Mammary epithelial cell (primary cell): ENCODE measurements at regions of chr1 and their contacts with region 1.

Region 1: GRCh38 chr1:26279456-26280332 is at the start of gene SH3BGRL3:
- DNase-seq: peak; percentile 86
- H3K4me3 ChIP-seq: peak within 1 kb of the TSS; percentile 70 to 88 (median 73)
- H3K27ac ChIP-seq: peak within 1 kb of the TSS; percentile 86
- H3K4me1 ChIP-seq: peaks cover 90% of the 10 kb centered on the region
- H3K27me3 ChIP-seq: no peaks in the 10 kb centered on the region
- CTCF ChIP-seq: peak; percentile 40 to 69
- total RNA-seq, gene SH3BGRL3: 15.8 to 497 TPM

Region 2: DNA sequence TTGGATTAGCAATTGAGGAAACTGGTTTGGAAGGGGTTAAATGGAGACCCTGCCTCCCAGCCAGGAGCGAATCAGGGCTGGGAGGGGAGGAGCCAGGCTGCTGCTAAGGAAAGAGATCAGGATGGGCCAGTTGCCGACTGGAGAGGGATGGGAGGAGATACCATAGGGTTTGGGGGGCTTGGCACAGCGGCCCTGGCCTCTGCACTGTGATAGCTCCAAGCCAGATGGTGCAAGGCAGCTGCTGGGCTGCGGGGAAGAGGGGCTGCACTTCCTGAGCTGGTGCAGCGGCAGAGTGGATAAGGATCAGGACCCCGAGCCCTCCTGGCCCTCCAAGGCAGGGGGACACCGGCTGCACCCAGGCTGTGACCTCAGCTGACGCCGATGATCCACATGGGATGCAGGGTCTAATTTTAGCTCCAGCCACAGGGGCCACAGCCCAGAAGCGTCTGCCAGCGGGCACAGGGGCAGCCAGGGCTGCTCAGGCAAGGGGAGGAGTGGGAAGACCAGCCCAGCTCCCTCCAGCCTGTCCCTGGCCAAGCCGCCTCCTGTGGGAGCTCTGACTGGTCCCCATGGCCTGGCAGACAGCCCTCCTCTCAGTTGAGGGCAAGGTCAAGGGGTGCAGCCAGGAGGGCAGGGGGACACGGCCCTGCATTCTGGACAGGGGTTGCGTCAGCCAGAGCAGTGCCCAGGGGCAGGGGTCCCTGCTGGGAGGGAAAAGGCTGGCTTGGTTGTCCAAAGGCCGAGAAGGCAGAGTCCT is 257.9 kb before region 1 on chr1 and contains the start of gene EXTL1:
- CTCF ChIA-PET with region 1: no interaction called
- dilution Hi-C with region 1: no loop called
- in situ Hi-C with region 1: no loop called
- intact Hi-C with region 1: no loop called
- DNase-seq: no peak
- H3K4me3 ChIP-seq: no peak within 1 kb of the TSS
- H3K27ac ChIP-seq: no peak within 1 kb of the TSS
- H3K4me1 ChIP-seq: peaks cover 47% of the 10 kb centered on the region
- H3K27me3 ChIP-seq: no peaks in the 10 kb centered on the region
- CTCF ChIP-seq: no peak
- total RNA-seq, gene EXTL1: 0.16 to 6.8 TPM

Region 3: DNA sequence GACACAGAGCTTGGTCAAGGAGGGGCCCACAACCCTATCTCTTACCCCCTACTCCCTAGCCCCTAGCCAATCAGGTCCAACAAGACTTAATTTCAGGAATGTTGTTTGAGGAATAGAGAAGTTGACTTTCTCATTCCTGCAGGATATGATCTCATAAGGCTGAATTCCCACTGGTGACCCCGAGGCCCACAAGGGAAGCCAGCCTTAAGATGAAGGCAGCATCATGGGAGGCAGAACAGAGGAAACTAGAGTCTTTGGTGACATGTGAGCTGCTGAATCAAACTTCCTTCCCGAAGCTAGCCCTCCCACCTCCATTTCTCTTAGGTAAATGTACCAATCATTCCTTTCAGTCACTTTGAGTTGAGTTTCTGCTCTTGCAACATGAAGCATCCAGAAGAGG is 177.2 kb before region 1 on chr1:
- CTCF ChIA-PET with region 1: no interaction called
- dilution Hi-C with region 1: no loop called
- in situ Hi-C with region 1: no loop called
- intact Hi-C with region 1: loop called (anchors 2 kb)
- DNase-seq: no peak
- H3K4me3 ChIP-seq: no peak overlapping the region
- H3K27ac ChIP-seq: no peak overlapping the region
- H3K4me1 ChIP-seq: peaks cover 6% of the 10 kb centered on the region
- H3K27me3 ChIP-seq: peaks cover 2% of the 10 kb centered on the region
- CTCF ChIP-seq: no peak

Region 4: GRCh38 chr1:26233903-26234643 is 45.6 kb before region 1 on chr1 and contains the start of gene CEP85:
- CTCF ChIA-PET with region 1: no interaction called
- dilution Hi-C with region 1: no loop called
- in situ Hi-C with region 1: no loop called
- intact Hi-C with region 1: loop called (anchors 2 kb)
- DNase-seq: peak; percentile 97
- H3K4me3 ChIP-seq: peak within 1 kb of the TSS; percentile 79 to 97 (median 87)
- H3K27ac ChIP-seq: peak within 1 kb of the TSS; percentile 66
- H3K4me1 ChIP-seq: peaks cover 16% of the 10 kb centered on the region
- H3K27me3 ChIP-seq: no peaks in the 10 kb centered on the region
- CTCF ChIP-seq: peak; percentile 88 to 96
- total RNA-seq, gene CEP85: 14.3 to 16.9 TPM

Region 5: DNA sequence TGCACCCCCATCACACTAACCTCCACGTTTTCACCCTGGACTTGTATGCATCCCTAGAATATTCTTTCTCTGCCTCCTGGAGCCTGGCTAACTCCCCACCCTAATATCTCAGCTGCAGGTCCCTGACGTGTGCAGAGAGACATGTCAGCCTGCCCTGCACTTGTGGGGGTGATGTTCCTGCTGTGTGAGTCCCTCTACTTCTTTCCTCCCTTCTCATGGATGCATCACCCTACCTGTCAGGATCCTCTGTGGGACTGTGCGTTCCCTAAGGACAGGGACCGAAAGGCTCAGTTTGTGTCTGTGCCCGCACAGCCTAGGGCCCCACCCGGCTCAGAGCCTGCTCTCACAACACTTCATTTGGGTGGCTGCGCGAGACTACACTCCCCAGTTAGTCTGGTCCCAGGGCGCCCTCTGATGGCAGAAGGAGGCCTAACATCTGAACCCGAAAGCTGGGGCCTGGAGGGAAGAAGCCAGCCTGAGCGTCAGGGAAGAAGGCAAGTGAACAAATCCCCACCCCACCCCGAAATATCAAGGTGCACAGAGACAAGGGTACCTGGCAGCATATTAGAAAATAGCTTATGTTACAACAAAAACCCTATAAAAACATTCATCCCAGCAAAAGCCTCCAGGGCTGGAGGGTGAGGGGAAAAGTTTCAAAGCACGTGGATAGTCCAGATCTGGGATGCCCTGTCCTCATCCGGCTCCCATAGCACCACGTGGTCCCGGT is 41.8 kb after region 1 on chr1:
- CTCF ChIA-PET with region 1: no interaction called
- dilution Hi-C with region 1: no loop called
- in situ Hi-C with region 1: loop called in 1 of 2 experiments (anchors 5 kb)
- intact Hi-C with region 1: loop called (anchors 1 kb)
- DNase-seq: peak; percentile 76
- H3K4me3 ChIP-seq: no peak overlapping the region
- H3K27ac ChIP-seq: no peak overlapping the region
- H3K4me1 ChIP-seq: peaks cover 9% of the 10 kb centered on the region
- H3K27me3 ChIP-seq: no peaks in the 10 kb centered on the region
- CTCF ChIP-seq: peak; percentile 78 to 91

Region 6: DNA sequence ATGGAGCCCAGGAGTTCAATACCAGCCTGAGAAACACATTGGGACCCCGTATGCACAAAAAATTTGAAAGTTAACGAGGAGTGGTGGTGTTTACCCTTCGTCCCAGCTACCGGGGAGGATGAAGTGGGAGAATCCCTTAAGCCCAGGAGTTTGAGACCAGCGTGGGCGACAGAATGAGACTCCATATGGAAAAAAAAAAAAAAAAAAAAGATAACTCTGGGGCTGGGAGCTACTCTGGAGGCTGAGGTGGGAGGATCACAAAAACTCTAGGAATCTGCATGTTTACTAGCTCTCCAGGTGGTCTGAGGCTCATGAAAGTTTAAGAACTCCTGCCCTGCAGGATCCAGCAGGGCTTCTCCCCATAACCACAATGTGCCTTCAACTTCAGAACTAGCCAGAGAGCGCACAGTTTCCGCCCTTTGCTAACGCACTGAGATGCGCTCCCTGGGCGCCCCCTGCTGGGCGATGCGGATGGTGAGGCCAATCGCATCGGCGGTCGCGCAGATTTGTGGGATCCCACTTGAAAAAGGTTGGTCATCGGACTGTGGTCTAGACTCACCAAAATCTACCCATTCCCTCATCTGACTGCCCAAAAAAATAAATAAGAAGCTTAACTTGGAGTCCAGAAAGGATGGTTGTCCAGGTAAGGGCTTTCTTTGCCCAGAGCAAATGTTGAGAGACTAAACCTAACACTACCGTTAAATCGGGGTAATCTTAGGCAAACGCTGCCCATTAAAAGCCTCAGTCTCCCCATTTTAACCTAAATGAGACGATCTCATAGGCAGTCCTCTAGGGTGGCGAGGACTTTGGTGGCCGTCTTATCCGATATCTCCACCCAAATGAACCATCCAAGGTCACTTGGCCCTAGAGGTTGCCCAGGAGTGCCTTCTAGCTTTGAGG is 84.1 kb after region 1 on chr1:
- CTCF ChIA-PET with region 1: no interaction called
- dilution Hi-C with region 1: no loop called
- in situ Hi-C with region 1: no loop called
- intact Hi-C with region 1: loop called (anchors 2 kb)
- DNase-seq: peak; percentile 56
- H3K4me3 ChIP-seq: no peak overlapping the region
- H3K27ac ChIP-seq: no peak overlapping the region
- H3K4me1 ChIP-seq: peaks cover 14% of the 10 kb centered on the region
- H3K27me3 ChIP-seq: no peaks in the 10 kb centered on the region
- CTCF ChIP-seq: peak; percentile 94 to 98

Region 7: DNA sequence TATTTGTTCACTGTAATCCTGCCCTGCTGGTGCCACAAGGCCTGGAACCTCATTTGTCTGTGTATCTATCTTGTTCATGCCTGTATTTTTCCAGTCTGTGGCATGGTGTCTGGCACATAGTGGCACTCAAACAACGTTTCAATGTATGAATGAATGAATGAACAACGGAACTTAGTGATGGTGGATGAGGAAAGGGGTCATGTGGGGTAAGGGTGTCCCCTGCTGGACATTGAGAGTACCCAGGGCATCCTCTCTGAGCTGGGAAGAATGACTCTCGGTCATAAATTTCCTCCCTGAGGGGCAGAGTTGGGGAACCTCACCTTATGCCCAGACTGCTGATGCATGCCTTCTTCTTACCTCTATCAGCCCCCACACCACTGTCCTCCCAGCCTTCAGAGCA is 111.8 kb after region 1 on chr1:
- CTCF ChIA-PET with region 1: interaction called, 5 read pairs
- dilution Hi-C with region 1: no loop called
- in situ Hi-C with region 1: loop called in 1 of 2 experiments (anchors 25 kb)
- intact Hi-C with region 1: loop called (anchors 1 kb)
- DNase-seq: peak; percentile 48
- H3K4me3 ChIP-seq: no peak overlapping the region
- H3K27ac ChIP-seq: no peak overlapping the region
- H3K4me1 ChIP-seq: peaks cover 4% of the 10 kb centered on the region
- H3K27me3 ChIP-seq: no peaks in the 10 kb centered on the region
- CTCF ChIP-seq: peak; percentile 91 to 97

Region 8: DNA sequence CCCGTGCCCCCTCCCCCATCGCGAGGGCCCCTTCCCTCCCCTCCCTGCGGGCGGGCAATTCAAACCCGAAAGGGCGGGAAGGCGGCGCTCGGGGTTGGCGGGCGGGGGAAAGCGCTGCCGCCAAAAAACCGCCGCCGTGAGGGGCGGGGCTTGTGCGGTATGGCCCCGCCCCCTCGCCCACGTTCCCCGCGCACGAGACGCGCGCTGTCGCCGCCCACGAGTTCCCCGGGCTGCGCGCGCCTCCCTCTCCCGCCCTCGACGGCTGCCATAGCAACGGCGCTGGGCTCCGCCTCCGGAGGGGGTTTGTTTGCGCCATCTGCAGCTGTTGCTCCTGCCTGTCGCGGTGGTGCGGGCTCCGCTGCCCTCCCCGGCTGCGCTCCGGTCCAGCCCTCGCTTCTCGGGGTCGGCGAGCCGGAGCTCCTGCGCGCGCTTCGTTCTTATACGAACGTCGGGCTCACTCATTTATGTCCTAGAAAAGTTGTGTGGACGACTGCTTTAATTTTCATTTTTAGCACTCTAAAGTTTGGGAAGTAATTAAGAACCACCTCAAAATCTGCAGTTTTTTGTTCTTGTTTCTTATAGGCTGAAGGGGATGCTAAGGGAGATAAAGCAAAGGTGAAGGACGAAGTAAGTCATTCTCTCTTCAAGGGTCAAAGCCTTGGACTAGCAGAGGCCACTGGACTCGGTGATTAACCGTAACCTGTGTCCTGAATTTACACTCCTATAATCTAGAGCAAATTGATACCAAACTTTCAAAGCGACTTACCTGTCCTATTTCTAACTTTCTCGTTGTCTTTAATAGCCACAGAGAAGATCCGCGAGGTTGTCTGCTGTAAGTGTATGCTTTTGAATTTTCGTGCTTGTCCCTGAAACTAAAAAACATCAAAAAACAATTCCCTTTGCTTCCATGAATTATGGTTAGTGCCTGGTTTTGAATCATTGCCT is 193.5 kb after region 1 on chr1:
- CTCF ChIA-PET with region 1: no interaction called
- dilution Hi-C with region 1: no loop called
- in situ Hi-C with region 1: no loop called
- intact Hi-C with region 1: loop called (anchors 5 kb)
- DNase-seq: peak; percentile 92
- H3K4me3 ChIP-seq: peak overlapping the region; percentile 78 to 88 (median 81)
- H3K27ac ChIP-seq: peak overlapping the region; percentile 65
- H3K4me1 ChIP-seq: peaks cover 39% of the 10 kb centered on the region
- H3K27me3 ChIP-seq: no peaks in the 10 kb centered on the region
- CTCF ChIP-seq: no peak

Region 9: DNA sequence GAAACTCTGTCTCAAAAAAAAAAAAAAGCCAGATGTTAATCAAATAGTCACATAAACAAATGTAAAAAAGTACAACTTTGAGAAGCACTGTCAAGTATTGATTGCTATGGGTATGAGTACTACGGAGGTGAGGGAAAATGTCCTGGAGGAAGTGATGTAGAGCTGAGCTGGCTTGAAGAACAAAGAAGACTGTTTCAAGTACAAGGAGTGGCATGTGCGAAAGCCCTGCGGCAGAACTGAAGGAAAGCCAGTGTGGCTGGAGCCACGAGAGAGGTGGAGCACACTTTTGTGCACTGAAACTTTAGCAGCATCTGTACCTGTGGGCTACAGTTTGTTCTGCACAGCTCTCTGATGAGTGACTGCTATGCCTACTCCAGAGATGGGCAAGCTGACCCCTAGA is 244.5 kb after region 1 on chr1:
- CTCF ChIA-PET with region 1: no interaction called
- dilution Hi-C with region 1: no loop called
- in situ Hi-C with region 1: no loop called
- intact Hi-C with region 1: no loop called
- DNase-seq: peak; percentile 96
- H3K4me3 ChIP-seq: no peak overlapping the region
- H3K27ac ChIP-seq: peak overlapping the region; percentile 79
- H3K4me1 ChIP-seq: peaks cover 14% of the 10 kb centered on the region
- H3K27me3 ChIP-seq: no peaks in the 10 kb centered on the region
- CTCF ChIP-seq: no peak